MCF 10A (cell line): ENCODE measurements at regions of chr5 and their contacts with region 1.

Region 1: DNA sequence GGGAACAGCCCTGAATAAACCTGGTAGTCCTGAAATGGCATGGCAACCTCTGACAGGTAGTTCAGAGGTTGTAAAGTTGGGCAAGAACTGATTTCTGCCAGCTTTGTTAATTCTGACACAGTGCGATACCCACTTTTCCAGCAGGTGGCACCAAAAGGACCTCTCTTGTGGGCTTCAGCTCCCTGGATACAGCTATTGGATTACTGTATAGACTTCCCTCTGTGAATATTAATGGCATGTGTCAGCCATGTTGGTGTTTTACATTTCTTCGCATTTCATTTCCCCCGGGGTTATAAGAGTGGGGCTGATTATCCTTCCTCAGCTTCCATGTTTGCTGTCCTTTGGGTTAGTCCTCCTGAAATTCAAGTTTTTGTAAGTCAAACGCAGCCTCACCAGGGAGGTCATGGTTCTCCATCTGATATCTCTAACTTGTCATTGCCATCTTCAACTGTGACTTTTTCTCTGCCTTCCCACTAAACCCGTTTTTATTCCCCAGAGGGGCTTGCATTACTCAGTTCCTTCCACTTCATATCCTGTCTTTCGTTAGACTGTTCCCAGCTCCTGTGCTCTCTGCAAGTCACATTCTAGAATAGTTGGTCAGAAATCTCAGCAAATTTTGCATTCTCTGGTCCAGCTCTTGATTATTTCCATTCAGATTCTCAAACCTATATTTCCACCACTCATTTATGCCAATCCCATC is 135.6 kb downstream of the LIFR start:
- DNase-seq: peak; percentile 84
- H3K4me3 Mint-ChIP-seq: no peak overlapping the region
- H3K27ac Mint-ChIP-seq: no peak overlapping the region
- H3K4me1 Mint-ChIP-seq: peaks cover 8% of the 10 kb centered on the region
- H3K27me3 Mint-ChIP-seq: no peaks in the 10 kb centered on the region
- CTCF ChIP-seq: peak; percentile 67

Region 2: GRCh38 chr5:38382898-38383297 is 37.9 kb before region 1 on chr5:
- CTCF ChIA-PET with region 1: interaction called, 24 read pairs
- POLR2A ChIA-PET with region 1: interaction called, 3 read pairs
- intact Hi-C with region 1: no loop called
- DNase-seq: peak; percentile 85
- H3K4me3 Mint-ChIP-seq: no peak overlapping the region
- H3K27ac Mint-ChIP-seq: no peak overlapping the region
- H3K4me1 Mint-ChIP-seq: no peaks in the 10 kb centered on the region
- H3K27me3 Mint-ChIP-seq: peaks cover 17% of the 10 kb centered on the region
- CTCF ChIP-seq: peak; percentile 84

Region 3: GRCh38 chr5:38433160-38433861 is 12.5 kb after region 1 on chr5:
- CTCF ChIA-PET with region 1: interaction called, 38 read pairs
- POLR2A ChIA-PET with region 1: no interaction called
- intact Hi-C with region 1: no loop called
- DNase-seq: no peak
- H3K4me3 Mint-ChIP-seq: no peak overlapping the region
- H3K27ac Mint-ChIP-seq: no peak overlapping the region
- H3K4me1 Mint-ChIP-seq: no peaks in the 10 kb centered on the region
- H3K27me3 Mint-ChIP-seq: no peaks in the 10 kb centered on the region
- CTCF ChIP-seq: no peak

Region 4: GRCh38 chr5:38528162-38528703 is 107.4 kb after region 1 on chr5:
- CTCF ChIA-PET with region 1: no interaction called
- POLR2A ChIA-PET with region 1: no interaction called
- intact Hi-C with region 1: no loop called
- DNase-seq: no peak
- H3K4me3 Mint-ChIP-seq: no peak overlapping the region
- H3K27ac Mint-ChIP-seq: no peak overlapping the region
- H3K4me1 Mint-ChIP-seq: no peaks in the 10 kb centered on the region
- H3K27me3 Mint-ChIP-seq: no peaks in the 10 kb centered on the region
- CTCF ChIP-seq: no peak

Region 5: DNA sequence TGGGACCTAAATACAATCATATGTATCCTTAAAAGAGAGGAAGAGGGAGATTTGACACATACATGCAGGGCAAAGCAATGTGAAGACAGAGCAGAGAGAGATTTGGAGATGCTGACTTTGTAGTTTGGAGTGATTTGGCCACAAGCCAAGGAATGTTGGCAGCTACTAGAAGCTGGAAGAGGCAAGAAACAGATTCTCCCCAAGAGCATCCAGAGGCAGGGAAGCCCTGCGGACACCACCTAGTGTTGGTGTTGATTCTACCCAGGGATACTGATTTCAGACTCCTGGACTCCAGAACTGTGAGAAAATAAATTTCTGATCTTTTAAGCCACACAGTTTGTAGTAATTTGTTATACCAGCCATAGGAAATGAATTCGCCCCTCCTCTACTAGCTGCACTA is 360.1 kb after region 1 on chr5:
- CTCF ChIA-PET with region 1: interaction called, 10 read pairs
- POLR2A ChIA-PET with region 1: no interaction called
- intact Hi-C with region 1: no loop called
- DNase-seq: peak; percentile 88
- H3K4me3 Mint-ChIP-seq: no peak overlapping the region
- H3K27ac Mint-ChIP-seq: no peak overlapping the region
- H3K4me1 Mint-ChIP-seq: peaks cover 29% of the 10 kb centered on the region
- H3K27me3 Mint-ChIP-seq: peaks cover 13% of the 10 kb centered on the region
- CTCF ChIP-seq: no peak